Activated CD8-positive, alpha-beta T cell treated with anti-CD3 and anti-CD28 coated beads for 36 hours (primary cell): ENCODE measurements at regions of chr20 and their contacts with region 1.

Region 1: GRCh38 chr20:41047975-41048305 is 19.3 kb downstream of the TOP1 start:
- DNase-seq: no peak
- ATAC-seq: peak; percentile 52
- H3K4me3 Mint-ChIP-seq: peak overlapping the region; percentile 79
- H3K27ac Mint-ChIP-seq: peak overlapping the region; percentile 87
- H3K4me1 Mint-ChIP-seq: peaks cover 86% of the 10 kb centered on the region
- H3K27me3 Mint-ChIP-seq: no peaks in the 10 kb centered on the region
- CTCF ChIP-seq: no peak

Region 2: GRCh38 chr20:41078329-41078728 is 30.4 kb after region 1 on chr20:
- CTCF ChIA-PET with region 1: no interaction called
- POLR2A ChIA-PET with region 1: no interaction called
- intact Hi-C with region 1: loop called (anchors 5 kb)
- DNase-seq: no peak
- ATAC-seq: peak; percentile 27
- H3K4me3 Mint-ChIP-seq: no peak overlapping the region
- H3K27ac Mint-ChIP-seq: peak overlapping the region; percentile 24
- H3K4me1 Mint-ChIP-seq: peaks cover 44% of the 10 kb centered on the region
- H3K27me3 Mint-ChIP-seq: no peaks in the 10 kb centered on the region
- CTCF ChIP-seq: no peak